Mammary epithelial cell (primary cell): ENCODE measurements at regions of chr6 and their contacts with region 1.

Region 1: GRCh38 chr6:36724514-36725390 is 27.1 kb downstream of the RAB44 start:
- DNase-seq: peak; percentile 63
- H3K4me3 ChIP-seq: no peak overlapping the region
- H3K27ac ChIP-seq: no peak overlapping the region
- H3K4me1 ChIP-seq: peaks cover 18% of the 10 kb centered on the region
- H3K27me3 ChIP-seq: no peaks in the 10 kb centered on the region
- CTCF ChIP-seq: peak; percentile 78 to 80

Region 2: GRCh38 chr6:36615018-36615761 is 109.6 kb before region 1 on chr6:
- CTCF ChIA-PET with region 1: no interaction called
- dilution Hi-C with region 1: no loop called
- in situ Hi-C with region 1: loop called in 1 of 2 experiments (anchors 5 kb)
- intact Hi-C with region 1: loop called (anchors 1 kb)
- DNase-seq: peak; percentile 65
- H3K4me3 ChIP-seq: no peak overlapping the region
- H3K27ac ChIP-seq: no peak overlapping the region
- H3K4me1 ChIP-seq: peaks cover 15% of the 10 kb centered on the region
- H3K27me3 ChIP-seq: no peaks in the 10 kb centered on the region
- CTCF ChIP-seq: peak; percentile 82 to 83

Region 3: GRCh38 chr6:36688534-36689075 is 36.1 kb before region 1 on chr6:
- CTCF ChIA-PET with region 1: no interaction called
- dilution Hi-C with region 1: no loop called
- in situ Hi-C with region 1: no loop called
- intact Hi-C with region 1: loop called (anchors 1 kb)
- DNase-seq: no peak
- H3K4me3 ChIP-seq: no peak overlapping the region
- H3K27ac ChIP-seq: no peak overlapping the region
- H3K4me1 ChIP-seq: peaks cover 33% of the 10 kb centered on the region
- H3K27me3 ChIP-seq: no peaks in the 10 kb centered on the region
- CTCF ChIP-seq: no peak